Aorta (tissue), 5 donors: ENCODE measurements at regions of chr9 and their contacts with region 1.

Region 1: DNA sequence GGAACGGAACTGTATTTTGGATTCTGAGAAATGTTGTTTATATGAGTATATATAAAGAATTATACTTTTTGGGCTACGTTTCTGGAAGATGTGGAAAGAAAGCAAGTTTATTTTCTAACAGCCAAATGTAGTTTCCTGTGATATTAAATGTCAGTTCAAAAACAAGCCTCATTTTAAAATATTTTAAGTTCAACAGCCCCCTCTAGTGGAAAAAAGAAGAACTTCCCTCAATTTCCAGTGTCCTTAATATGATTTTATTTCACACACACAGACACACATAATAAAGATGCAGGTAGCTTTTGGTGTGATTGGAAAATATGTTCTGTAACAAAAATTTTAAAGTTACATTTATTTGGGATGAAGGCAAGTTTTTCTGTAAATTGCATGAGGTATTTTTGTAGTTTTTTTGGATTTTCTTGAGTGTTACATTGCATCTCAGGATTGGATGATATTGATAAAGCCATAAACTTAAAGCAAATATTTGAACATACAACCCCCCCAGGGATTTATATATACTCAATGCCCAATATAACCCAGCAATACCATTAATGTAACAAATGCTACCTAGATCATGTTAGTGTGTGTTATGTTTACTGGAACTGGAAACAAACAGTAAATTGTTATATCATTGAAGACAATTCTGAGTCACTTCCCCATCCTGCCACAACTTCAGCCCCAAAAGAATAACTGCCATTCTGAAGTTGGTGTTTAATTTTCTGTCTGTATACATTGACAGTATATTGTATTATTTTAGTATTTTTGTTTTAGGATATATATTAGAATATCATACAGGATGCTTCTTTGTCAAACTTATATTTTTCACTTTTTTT is 54.0 kb downstream of the CCDC171 start:
- DNase-seq: no peak
- ATAC-seq: peak; percentile 75
- H3K4me3 ChIP-seq: no peak overlapping the region
- H3K27ac ChIP-seq: no peak overlapping the region
- H3K4me1 ChIP-seq: no peaks in the 10 kb centered on the region
- H3K27me3 ChIP-seq: no peaks in the 10 kb centered on the region

Region 2: GRCh38 chr9:15104826-15105420 is 501.9 kb before region 1 on chr9:
- intact Hi-C with region 1: loop called in 1 of 2 experiments (anchors 10 kb)
- DNase-seq: no peak
- ATAC-seq: no peak
- H3K4me3 ChIP-seq: no peak overlapping the region
- H3K27ac ChIP-seq: no peak overlapping the region
- H3K4me1 ChIP-seq: no peaks in the 10 kb centered on the region
- H3K27me3 ChIP-seq: no peaks in the 10 kb centered on the region

Region 3: DNA sequence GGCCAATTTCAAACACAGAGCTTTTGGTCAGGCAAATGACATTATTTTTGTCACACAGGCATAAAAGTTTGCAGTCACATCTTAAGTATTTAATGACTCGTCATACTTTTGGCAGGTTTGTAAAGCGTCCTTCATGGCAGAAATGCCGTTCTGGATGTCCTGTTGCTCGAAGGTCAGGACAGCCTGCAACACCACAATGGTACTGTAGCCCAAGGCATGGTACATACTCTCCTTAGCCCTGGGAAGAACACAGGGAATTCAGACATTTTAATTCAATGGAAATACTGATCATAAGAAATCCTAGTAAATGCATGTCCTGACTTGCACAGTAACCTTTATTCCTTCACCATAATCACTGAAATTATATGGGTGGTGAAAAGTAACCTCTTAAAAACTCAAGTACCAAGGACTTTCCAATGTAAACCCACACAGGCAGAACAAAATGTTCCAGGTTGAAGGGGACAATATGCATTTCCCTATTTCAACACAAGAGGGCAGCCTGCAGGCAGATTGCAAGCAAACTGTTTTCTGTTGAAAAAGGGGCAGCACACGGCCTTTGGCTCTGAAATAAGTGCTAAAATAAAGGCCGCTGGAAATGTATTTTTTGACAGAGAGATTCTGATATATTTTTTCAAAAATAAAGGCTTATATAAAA is 395.6 kb before region 1 on chr9:
- intact Hi-C with region 1: loop called in 1 of 2 experiments (anchors 10 kb)
- DNase-seq: peak in 1 of 2 donors; percentile 46
- ATAC-seq: peak; percentile 89
- H3K4me3 ChIP-seq: peak overlapping the region in 1 of 2 donors; percentile 16
- H3K27ac ChIP-seq: peak overlapping the region; percentile 46 to 84
- H3K4me1 ChIP-seq: peaks cover 0 to 7% of the 10 kb centered on the region in 2 donors
- H3K27me3 ChIP-seq: no peaks in the 10 kb centered on the region

Region 4: GRCh38 chr9:15430920-15431844 is 175.7 kb before region 1 on chr9:
- intact Hi-C with region 1: loop called in 1 of 2 experiments (anchors 10 kb)
- DNase-seq: no peak
- ATAC-seq: no peak
- H3K4me3 ChIP-seq: no peak overlapping the region
- H3K27ac ChIP-seq: no peak overlapping the region
- H3K4me1 ChIP-seq: no peaks in the 10 kb centered on the region
- H3K27me3 ChIP-seq: no peaks in the 10 kb centered on the region

Region 5: DNA sequence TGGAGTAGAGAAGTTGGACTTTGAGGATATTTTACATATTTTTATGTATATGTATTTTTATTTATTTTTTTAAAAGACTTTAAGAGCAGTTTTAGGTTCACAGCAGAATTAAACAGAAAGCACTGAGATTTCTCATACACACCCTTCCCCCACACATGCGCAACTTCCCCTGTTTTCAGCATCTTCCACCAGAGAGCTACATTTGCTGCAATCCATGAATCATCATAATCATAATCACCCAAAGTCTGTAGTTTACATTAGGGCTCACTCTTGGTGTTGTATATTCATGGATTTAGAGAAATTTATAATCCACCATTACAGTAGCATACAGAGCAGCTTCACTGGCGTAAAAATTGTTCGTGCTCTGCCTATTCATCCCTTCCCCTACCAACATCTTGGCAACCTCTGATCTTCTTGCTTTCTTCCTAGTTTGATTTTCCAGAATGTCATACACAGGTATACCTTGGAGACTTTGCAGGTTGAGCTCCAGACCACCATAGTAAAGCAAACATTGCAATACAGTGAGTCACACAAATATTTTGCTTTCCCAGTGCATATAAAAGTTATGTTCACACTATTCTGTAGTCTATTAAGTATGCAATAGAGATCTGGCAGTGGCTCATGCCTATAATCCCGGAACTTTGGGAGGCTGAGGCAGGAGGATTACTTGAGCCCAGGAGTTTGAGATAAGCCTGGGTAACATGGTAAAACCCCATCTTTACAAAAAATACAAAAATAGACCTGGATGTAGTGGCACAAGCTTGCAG is 63.6 kb before region 1 on chr9:
- intact Hi-C with region 1: no loop called
- DNase-seq: no peak
- ATAC-seq: no peak
- H3K4me3 ChIP-seq: no peak overlapping the region
- H3K27ac ChIP-seq: no peak overlapping the region
- H3K4me1 ChIP-seq: no peaks in the 10 kb centered on the region
- H3K27me3 ChIP-seq: no peaks in the 10 kb centered on the region